ENCODE measurements at regions of chr6 and their contacts with region 1.

Region 1: GRCh38 chr6:41941280-41942066 is at the start of gene CCND3:
- DNase-seq: peak; percentile 63 to 93 (median 76)
- ATAC-seq: peak; percentile 86
- H3K4me3 ChIP-seq: peak within 1 kb of the TSS; percentile 68
- H3K4me3 Mint-ChIP-seq: peak within 1 kb of the TSS; percentile 91 to 100 (median 93)
- H3K27ac ChIP-seq: peak within 1 kb of the TSS; percentile 76
- H3K27ac Mint-ChIP-seq: peak within 1 kb of the TSS; percentile 90 to 96 (median 94)
- H3K4me1 ChIP-seq: peaks cover 51 to 68% of the 10 kb centered on the region in 2 donors
- H3K4me1 Mint-ChIP-seq: peaks cover 40 to 83% (median 69%) of the 10 kb centered on the region in 7 donors
- H3K27me3 ChIP-seq: no peaks in the 10 kb centered on the region
- H3K27me3 Mint-ChIP-seq: no peaks in the 10 kb centered on the region
- total RNA-seq, gene CCND3: 285 to 433 (median 313) TPM

Region 2: DNA sequence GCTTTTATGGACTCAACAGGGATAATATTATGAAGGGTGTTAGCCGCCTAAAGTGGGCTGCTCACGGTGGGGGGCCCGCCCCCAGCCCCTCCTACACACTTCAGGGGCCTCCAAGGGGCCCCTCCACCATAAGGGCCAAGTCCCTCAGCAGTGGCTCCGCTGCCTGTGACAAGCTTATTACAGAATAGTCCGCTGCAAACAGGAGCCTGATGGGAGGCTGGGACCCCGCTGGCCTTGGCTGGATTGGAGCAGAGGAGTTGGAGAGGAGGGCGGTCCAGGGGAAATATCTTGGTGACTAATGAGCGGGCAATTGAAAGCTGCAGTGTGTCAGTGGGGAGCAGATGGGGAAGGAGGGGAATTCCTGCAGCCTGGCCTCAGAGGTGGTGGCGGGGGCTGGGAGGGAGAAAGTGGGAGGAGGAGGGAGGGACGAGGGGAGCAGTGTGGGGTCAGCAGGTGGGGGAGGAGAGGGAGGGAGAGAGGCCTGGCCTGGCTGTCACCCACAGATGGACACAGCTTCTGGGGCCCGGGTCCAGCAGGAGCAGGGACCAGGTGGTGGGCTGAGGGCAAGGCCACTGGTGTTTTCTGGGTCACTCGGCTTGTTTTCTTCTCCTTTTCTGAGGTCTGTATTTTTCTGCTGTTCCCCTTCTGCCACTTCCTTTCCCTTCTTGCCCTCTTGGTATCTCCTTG is 452.9 kb before region 1 on chr6:
- CTCF ChIA-PET with region 1: no interaction called
- POLR2A ChIA-PET with region 1: no interaction called
- intact Hi-C with region 1: no loop called
- DNase-seq: no peak
- ATAC-seq: no peak
- H3K4me3 ChIP-seq: no peak overlapping the region
- H3K4me3 Mint-ChIP-seq: no peak overlapping the region
- H3K27ac ChIP-seq: no peak overlapping the region
- H3K27ac Mint-ChIP-seq: no peak overlapping the region
- H3K4me1 ChIP-seq: no peaks in the 10 kb centered on the region
- H3K4me1 Mint-ChIP-seq: peaks cover 0 to 1% (median 0%) of the 10 kb centered on the region in 7 donors
- H3K27me3 ChIP-seq: no peaks in the 10 kb centered on the region
- H3K27me3 Mint-ChIP-seq: peaks cover 12 to 45% (median 18%) of the 10 kb centered on the region in 5 donors

Region 3: DNA sequence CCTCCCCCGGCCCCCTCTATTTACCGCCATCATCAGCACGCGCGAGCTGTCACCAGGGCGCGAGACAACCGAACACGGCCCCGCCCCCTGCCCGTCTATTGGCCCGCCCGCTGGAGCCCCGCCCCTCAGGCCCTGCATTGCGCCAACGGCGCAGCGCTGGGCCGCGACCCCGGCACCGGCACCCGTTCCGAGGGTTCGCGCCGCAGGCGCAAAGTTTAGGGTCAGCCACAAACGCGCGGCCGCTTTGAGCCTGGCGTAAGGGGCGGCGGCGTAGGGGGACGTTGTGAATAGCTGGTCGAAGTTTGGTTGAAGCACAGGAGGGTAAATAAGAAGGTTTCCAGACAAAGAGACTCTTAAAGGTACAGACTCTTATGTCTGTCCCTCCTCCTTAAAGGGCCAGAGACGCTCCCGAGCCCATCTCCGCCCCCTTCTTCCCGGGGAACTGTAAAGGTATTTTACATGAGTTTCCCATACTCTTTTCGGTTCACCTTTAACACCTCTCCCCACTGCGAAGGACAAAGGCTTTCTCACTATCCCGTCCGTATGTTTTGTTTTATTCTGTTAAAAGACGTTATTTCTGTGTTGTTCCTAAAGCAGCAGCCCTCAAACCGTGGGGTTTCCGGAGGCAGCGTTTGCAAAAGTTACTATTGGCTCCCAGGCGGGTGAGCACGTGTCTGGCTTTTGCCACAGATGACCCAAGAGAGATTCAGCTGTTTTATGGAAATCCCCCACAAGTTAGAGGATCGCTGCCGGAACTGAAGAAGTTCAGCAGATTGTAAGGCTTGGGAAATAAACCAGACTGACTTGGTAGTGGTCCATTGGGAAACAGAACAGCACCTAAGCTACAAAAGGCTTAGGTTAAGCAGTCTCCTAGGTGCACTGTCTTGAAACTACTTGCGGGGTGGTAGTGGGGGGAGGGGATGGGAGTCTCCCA is 45.9 kb before region 1 on chr6 and contains the start of gene USP49:
- CTCF ChIA-PET with region 1: no interaction called
- POLR2A ChIA-PET with region 1: interaction called, 3 read pairs
- intact Hi-C with region 1: loop called (anchors 1 to 2 kb)
- DNase-seq: peak; percentile 83 to 92 (median 90)
- ATAC-seq: peak; percentile 97
- H3K4me3 ChIP-seq: peak within 1 kb of the TSS; percentile 69
- H3K4me3 Mint-ChIP-seq: peak within 1 kb of the TSS in 1 of 10 donors; percentile 94
- H3K27ac ChIP-seq: peak within 1 kb of the TSS; percentile 76
- H3K27ac Mint-ChIP-seq: peak within 1 kb of the TSS in 7 of 9 donors; percentile 78 to 97 (median 93)
- H3K4me1 ChIP-seq: peaks cover 14 to 26% of the 10 kb centered on the region in 2 donors
- H3K4me1 Mint-ChIP-seq: peaks cover 5 to 17% (median 11%) of the 10 kb centered on the region in 7 donors
- H3K27me3 ChIP-seq: no peaks in the 10 kb centered on the region
- H3K27me3 Mint-ChIP-seq: peaks cover 0 to 7% (median 0%) of the 10 kb centered on the region in 5 donors
- total RNA-seq, gene USP49: 1.8 to 6.0 (median 3.1) TPM

Region 4: GRCh38 chr6:41929924-41930323 is 11.5 kb before region 1 on chr6:
- CTCF ChIA-PET with region 1: interaction called, 9 read pairs
- POLR2A ChIA-PET with region 1: interaction called, 22 read pairs
- intact Hi-C with region 1: no loop called
- DNase-seq: no peak
- ATAC-seq: no peak
- H3K4me3 ChIP-seq: no peak overlapping the region
- H3K4me3 Mint-ChIP-seq: no peak overlapping the region
- H3K27ac ChIP-seq: peak overlapping the region; percentile 7
- H3K27ac Mint-ChIP-seq: peak overlapping the region in 4 of 9 donors; percentile 47 to 72 (median 60)
- H3K4me1 ChIP-seq: peaks cover 0 to 5% of the 10 kb centered on the region in 2 donors
- H3K4me1 Mint-ChIP-seq: peaks cover 10 to 43% (median 30%) of the 10 kb centered on the region in 7 donors
- H3K27me3 ChIP-seq: no peaks in the 10 kb centered on the region
- H3K27me3 Mint-ChIP-seq: no peaks in the 10 kb centered on the region

Region 5: DNA sequence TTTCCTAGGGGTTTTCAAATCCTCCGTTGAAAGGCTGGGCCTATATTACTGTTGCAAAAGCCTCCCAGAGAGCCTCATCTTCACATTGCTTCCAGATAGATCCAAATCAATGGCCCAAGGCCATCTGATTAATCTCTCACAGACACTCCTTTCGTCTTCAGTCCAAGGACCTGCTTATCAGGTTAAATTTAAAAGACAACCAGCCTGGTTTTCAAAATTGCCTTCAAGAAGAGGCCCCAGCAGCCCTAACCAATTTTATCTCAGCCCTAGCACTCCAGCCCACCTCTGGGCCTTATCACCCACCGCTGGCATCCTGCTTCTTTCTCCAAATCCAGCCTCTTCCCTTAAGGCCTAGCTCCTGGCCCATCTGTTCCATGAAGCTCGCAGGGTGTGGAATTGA is 15.6 kb after region 1 on chr6:
- CTCF ChIA-PET with region 1: interaction called, 4 read pairs
- POLR2A ChIA-PET with region 1: interaction called, 4 read pairs
- intact Hi-C with region 1: loop called in 1 of 2 experiments (anchors 2 kb)
- DNase-seq: no peak
- ATAC-seq: no peak
- H3K4me3 ChIP-seq: no peak overlapping the region
- H3K4me3 Mint-ChIP-seq: peak overlapping the region in 2 of 10 donors; percentile 26 to 34
- H3K27ac ChIP-seq: no peak overlapping the region
- H3K27ac Mint-ChIP-seq: peak overlapping the region in 5 of 9 donors; percentile 11 to 90 (median 62)
- H3K4me1 ChIP-seq: peaks cover 16 to 32% of the 10 kb centered on the region in 2 donors
- H3K4me1 Mint-ChIP-seq: peaks cover 45 to 86% (median 72%) of the 10 kb centered on the region in 7 donors
- H3K27me3 ChIP-seq: no peaks in the 10 kb centered on the region
- H3K27me3 Mint-ChIP-seq: no peaks in the 10 kb centered on the region

Region 6: DNA sequence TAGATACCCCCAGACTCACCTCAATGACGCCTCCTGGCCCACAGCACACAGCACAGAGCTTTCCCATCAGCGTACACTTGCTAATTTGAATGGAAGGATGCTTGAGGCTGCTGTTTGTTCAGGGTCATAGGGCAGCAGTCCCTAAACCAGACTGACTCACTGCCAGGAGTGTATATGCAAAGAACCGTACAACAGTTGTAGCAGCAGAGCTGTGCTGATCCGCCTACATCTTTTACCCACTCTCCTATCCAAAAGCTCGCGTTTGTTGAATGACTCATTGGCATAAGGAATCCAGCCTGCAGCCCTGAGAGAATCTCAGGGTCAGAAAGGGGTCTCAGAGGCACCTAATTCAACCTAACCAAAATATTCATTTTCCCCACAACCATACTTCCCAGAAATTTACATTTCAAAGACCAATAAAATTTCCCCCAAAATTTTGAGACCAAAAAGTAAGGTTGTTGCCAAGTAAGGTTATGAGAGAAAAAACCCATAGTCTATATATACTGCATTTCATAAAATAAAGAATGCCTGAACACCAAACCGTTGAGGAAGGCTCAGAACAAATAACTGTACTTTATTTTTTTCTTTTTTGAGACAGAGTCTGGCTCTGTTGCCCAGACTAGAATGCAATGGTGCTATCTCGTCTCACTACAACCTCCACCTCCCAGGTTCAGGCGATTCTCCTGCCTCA is 35.5 kb after region 1 on chr6:
- CTCF ChIA-PET with region 1: no interaction called
- POLR2A ChIA-PET with region 1: interaction called, 3 read pairs
- intact Hi-C with region 1: loop called (anchors 5 kb)
- DNase-seq: peak in 1 of 9 donors; percentile 27
- ATAC-seq: no peak
- H3K4me3 ChIP-seq: no peak overlapping the region
- H3K4me3 Mint-ChIP-seq: peak overlapping the region in 8 of 10 donors; percentile 13 to 54 (median 44)
- H3K27ac ChIP-seq: peak overlapping the region; percentile 55
- H3K27ac Mint-ChIP-seq: peak overlapping the region; percentile 23 to 89 (median 82)
- H3K4me1 ChIP-seq: peaks cover 26 to 62% of the 10 kb centered on the region in 2 donors
- H3K4me1 Mint-ChIP-seq: peaks cover 44 to 85% (median 67%) of the 10 kb centered on the region in 7 donors
- H3K27me3 ChIP-seq: no peaks in the 10 kb centered on the region
- H3K27me3 Mint-ChIP-seq: no peaks in the 10 kb centered on the region

Region 7: GRCh38 chr6:41996997-41997396 is 55.5 kb after region 1 on chr6:
- CTCF ChIA-PET with region 1: no interaction called
- POLR2A ChIA-PET with region 1: no interaction called
- intact Hi-C with region 1: no loop called
- DNase-seq: no peak
- ATAC-seq: no peak
- H3K4me3 ChIP-seq: no peak overlapping the region
- H3K4me3 Mint-ChIP-seq: peak overlapping the region in 4 of 10 donors; percentile 18 to 60 (median 44)
- H3K27ac ChIP-seq: peak overlapping the region; percentile 39
- H3K27ac Mint-ChIP-seq: peak overlapping the region; percentile 11 to 88 (median 69)
- H3K4me1 ChIP-seq: peaks cover 0 to 12% of the 10 kb centered on the region in 2 donors
- H3K4me1 Mint-ChIP-seq: peaks cover 21 to 64% (median 46%) of the 10 kb centered on the region in 7 donors
- H3K27me3 ChIP-seq: no peaks in the 10 kb centered on the region
- H3K27me3 Mint-ChIP-seq: no peaks in the 10 kb centered on the region

Region 8: DNA sequence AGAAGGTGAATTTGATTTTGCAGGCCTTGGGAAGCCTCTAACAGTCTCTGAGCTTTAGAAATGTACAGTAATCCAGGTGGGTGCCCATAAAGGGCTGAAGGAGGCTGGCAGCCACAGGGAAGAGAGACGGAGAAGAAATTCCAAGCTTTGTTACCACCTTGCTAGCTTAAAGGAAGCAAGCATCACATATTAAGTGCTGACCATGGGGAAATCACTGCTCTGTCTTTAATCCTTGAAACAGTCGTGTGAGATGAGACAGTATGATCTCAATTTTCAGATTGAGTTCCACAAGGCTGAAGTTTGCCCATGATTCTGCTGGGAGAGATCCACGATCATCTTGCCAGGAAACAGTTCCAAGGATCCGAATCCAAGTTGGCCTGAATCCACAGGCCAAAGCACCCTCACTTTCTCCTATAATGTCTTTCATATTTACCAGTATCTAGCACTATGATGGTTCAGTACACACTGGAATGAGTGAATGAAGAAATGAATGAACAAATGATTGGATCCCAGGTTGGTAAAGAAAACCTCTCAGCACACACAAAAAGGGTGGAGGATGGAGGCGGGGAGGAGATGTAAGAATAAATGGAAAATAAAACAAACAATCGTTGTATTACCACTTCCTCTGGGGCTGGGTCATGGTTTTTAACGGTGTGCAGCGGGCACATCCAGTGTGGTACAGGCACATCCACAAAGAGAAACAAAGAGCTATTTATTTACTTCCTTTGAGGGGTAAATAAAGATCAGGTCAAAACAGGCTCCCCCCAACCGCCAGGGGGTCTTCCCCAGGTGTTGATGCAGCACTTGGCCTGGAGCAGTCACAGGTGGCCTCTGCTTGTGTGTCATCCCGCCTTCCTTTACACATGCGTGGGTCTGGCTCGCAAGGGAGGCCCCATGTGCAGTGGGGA is 80.6 kb after region 1 on chr6:
- CTCF ChIA-PET with region 1: interaction called, 3 read pairs
- POLR2A ChIA-PET with region 1: interaction called, 3 read pairs
- intact Hi-C with region 1: loop called (anchors 1 to 5 kb)
- DNase-seq: peak in 8 of 9 donors; percentile 64 to 86 (median 77)
- ATAC-seq: peak; percentile 85
- H3K4me3 ChIP-seq: peak overlapping the region; percentile 23
- H3K4me3 Mint-ChIP-seq: peak overlapping the region; percentile 73 to 91 (median 80)
- H3K27ac ChIP-seq: peak overlapping the region; percentile 62
- H3K27ac Mint-ChIP-seq: peak overlapping the region; percentile 87 to 98 (median 95)
- H3K4me1 ChIP-seq: peaks cover 69 to 72% of the 10 kb centered on the region in 2 donors
- H3K4me1 Mint-ChIP-seq: peaks cover 59 to 94% (median 78%) of the 10 kb centered on the region in 7 donors
- H3K27me3 ChIP-seq: no peaks in the 10 kb centered on the region
- H3K27me3 Mint-ChIP-seq: no peaks in the 10 kb centered on the region

Region 9: GRCh38 chr6:42050266-42051032 is 109.0 kb after region 1 on chr6 and contains the start of gene TAF8:
- CTCF ChIA-PET with region 1: interaction called, 32 read pairs
- POLR2A ChIA-PET with region 1: interaction called, 180 read pairs
- intact Hi-C with region 1: loop called in 1 of 2 experiments (anchors 1 kb)
- DNase-seq: peak; percentile 76 to 89 (median 87)
- ATAC-seq: peak; percentile 80
- H3K4me3 ChIP-seq: peak within 1 kb of the TSS; percentile 98
- H3K4me3 Mint-ChIP-seq: peak within 1 kb of the TSS; percentile 89 to 99 (median 99)
- H3K27ac ChIP-seq: peak within 1 kb of the TSS; percentile 78
- H3K27ac Mint-ChIP-seq: peak within 1 kb of the TSS; percentile 93 to 98 (median 97)
- H3K4me1 ChIP-seq: peaks cover 24 to 27% of the 10 kb centered on the region in 2 donors
- H3K4me1 Mint-ChIP-seq: peaks cover 36 to 70% (median 51%) of the 10 kb centered on the region in 7 donors
- H3K27me3 ChIP-seq: no peaks in the 10 kb centered on the region
- H3K27me3 Mint-ChIP-seq: no peaks in the 10 kb centered on the region
- total RNA-seq, gene TAF8: 41.6 to 58.2 (median 50.8) TPM